ENCODE measurements at regions of chr7 and their contacts with region 1.

Region 1: GRCh38 chr7:135761751-135762488 is 13.3 kb upstream of the FAM180A start:
- DNase-seq: peak in 3 of 7 donors; percentile 34 to 77 (median 37)
- H3K4me3 ChIP-seq: no peak overlapping the region
- H3K27ac ChIP-seq: peak overlapping the region in 4 of 5 donors; percentile 4 to 70 (median 51)
- H3K4me1 ChIP-seq: no peaks in the 10 kb centered on the region
- H3K27me3 ChIP-seq: no peaks in the 10 kb centered on the region
- CTCF ChIP-seq: no peak
- POLR2A ChIP-seq: no peak

Region 2: DNA sequence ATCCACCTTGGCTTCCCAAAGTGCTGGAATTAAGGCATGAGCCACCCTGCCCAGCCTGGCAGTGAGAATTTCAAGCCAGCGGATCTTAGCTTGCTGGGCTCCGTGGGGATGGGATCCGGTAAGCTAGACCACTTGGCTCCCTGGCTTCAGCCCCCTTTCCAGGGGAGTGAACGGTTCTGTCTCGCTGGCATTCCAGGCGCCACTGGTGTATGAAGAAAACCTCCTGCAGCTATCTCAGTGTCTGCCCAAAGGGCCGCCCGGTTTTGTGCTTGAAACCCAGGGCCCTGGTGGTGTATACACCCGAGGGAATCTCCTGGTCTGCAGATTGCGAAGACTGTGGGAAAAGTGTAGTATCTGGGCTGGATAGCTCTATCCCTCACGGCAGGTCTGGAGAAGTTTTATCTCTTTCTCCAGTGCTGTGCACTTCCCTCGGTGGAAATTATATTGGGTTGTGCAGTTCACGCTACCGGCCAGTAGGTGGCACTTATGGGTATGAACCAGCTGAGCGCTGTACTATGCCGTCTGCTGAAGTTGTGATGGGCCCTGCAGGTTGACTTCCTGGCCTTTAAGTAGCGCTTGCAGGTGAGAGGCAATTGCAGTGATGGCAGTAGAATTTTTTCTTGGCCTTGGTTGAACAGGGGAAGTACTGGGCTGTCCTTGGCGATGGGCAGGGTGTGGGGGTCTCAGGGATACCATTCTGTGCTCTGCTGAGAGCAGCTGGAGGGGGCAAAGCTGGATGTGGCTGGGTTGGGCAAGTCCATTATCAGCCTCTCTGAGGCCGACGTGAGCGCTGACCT is 353.2 kb after region 1 on chr7:
- intact Hi-C with region 1: loop called in 1 of 2 experiments (anchors 5 kb)
- DNase-seq: peak; percentile 41 to 78 (median 53)
- H3K4me3 ChIP-seq: no peak overlapping the region
- H3K27ac ChIP-seq: no peak overlapping the region
- H3K4me1 ChIP-seq: no peaks in the 10 kb centered on the region
- H3K27me3 ChIP-seq: no peaks in the 10 kb centered on the region
- CTCF ChIP-seq: peak; percentile 50 to 74 (median 64)
- POLR2A ChIP-seq: no peak

Region 3: DNA sequence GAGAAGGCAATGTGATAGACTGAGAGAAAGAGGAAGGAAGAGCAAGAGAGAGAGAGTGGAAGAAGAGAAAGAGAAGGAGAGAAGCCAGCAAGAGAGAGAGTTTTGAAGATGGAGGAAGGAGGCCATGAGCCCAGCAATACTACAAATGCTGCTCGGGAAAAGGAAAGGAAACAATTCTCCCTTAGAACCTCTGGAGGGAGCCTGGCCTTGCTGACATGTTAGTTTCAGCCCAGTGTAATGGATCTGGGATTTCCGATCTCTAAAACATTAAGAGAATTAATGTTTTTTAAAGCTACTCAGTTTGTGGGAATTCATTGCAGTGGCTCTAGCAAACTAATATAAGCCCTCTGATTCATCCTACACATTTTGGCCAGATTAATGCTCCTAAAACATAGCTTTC is 422.1 kb after region 1 on chr7:
- intact Hi-C with region 1: no loop called
- DNase-seq: no peak
- H3K4me3 ChIP-seq: no peak overlapping the region
- H3K27ac ChIP-seq: no peak overlapping the region
- H3K4me1 ChIP-seq: no peaks in the 10 kb centered on the region
- H3K27me3 ChIP-seq: no peaks in the 10 kb centered on the region
- CTCF ChIP-seq: peak in 1 of 6 experiments; percentile 9
- POLR2A ChIP-seq: no peak